Natural killer cell (primary cell): ENCODE measurements at regions of chrX and their contacts with region 1.

Region 1: DNA sequence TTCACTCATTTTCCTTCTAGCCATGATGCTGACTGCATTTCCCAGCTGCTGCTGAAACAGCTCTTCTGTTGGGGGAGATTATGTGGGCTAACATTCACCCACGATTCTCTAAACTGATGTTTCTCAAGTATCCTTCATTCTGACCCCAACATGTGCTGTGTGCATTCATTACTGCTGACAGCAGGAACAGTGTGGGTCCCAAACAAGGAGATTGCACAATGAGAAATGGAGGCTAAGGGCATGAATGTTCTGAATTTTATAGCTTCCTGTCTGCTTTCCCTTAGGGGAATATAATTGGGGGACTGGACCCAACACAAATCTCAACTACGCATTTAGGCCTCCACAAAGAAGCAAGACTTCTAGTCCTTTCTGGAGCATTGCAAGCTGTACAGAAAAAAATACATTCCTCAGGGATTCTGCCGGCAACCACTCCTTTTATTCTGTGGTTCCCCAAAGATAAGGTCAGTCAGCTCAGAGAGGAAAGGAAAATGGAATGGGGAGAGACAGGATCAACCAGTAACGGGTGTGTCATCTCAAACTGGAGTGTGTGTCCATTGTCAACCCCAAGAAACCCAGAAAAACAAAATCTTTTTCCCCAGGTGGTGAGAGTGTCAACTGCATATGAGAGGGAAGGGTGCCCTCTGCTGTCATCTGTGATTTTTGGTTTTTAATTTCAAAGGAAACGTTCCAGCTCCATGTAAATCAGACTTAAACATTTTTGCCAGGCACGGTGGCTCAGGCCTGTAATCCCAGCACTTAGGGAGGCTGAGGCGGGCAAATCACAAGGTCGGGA is 81.5 kb upstream of the EGFL6 start:
- DNase-seq: peak; percentile 18 to 77
- ATAC-seq: peak; percentile 36 to 59 (median 52)
- H3K4me3 ChIP-seq: no peak overlapping the region
- H3K4me3 Mint-ChIP-seq: peak overlapping the region; percentile 31
- H3K27ac ChIP-seq: peak overlapping the region; percentile 76
- H3K27ac Mint-ChIP-seq: peak overlapping the region; percentile 77 to 81
- H3K4me1 ChIP-seq: peaks cover 45% of the 10 kb centered on the region
- H3K4me1 Mint-ChIP-seq: peaks cover 42 to 48% of the 10 kb centered on the region in 2 donors
- H3K27me3 ChIP-seq: no peaks in the 10 kb centered on the region
- H3K27me3 Mint-ChIP-seq: peaks cover 0 to 16% of the 10 kb centered on the region in 2 donors
- CTCF ChIP-seq: peak; percentile 58

Region 2: GRCh38 chrX:12814420-12814819 is 673.5 kb before region 1 on chrX:
- intact Hi-C with region 1: loop called (anchors 5 kb)
- DNase-seq: peak in 1 of 2 donors; percentile 64
- ATAC-seq: peak; percentile 62 to 78 (median 65)
- H3K4me3 ChIP-seq: no peak overlapping the region
- H3K4me3 Mint-ChIP-seq: no peak overlapping the region
- H3K27ac ChIP-seq: no peak overlapping the region
- H3K27ac Mint-ChIP-seq: no peak overlapping the region
- H3K4me1 ChIP-seq: no peaks in the 10 kb centered on the region
- H3K4me1 Mint-ChIP-seq: peaks cover 5% of the 10 kb centered on the region in 2 donors
- H3K27me3 ChIP-seq: no peaks in the 10 kb centered on the region
- H3K27me3 Mint-ChIP-seq: no peaks in the 10 kb centered on the region
- CTCF ChIP-seq: peak; percentile 48

Region 3: DNA sequence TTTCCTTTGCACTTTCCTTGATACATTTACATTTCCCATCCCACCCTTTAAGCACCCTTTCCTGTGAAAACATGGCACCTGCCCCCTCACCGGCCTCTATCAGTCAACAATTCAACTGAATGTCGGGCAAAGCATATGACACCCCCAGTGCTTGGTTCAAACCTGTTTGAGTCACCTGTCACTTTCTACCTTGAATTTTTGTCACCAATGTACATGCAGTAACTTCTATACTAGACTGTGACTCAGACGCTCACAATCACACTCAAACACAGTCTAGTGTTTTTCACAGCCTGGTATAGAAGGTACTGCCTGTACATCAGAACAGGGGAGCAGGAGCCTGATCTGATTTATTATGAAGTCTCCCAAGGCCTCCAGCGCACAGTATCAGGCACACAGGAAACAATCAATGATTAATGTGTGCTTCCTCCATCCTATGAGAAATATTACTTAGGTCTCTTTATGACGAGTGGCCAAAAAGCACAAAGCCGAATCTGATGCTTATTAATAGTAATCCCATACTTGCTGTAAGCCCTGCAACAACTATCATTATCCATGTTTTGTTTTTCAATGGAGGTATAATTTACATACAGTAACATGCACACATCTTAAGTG is 394.3 kb before region 1 on chrX:
- intact Hi-C with region 1: loop called (anchors 1 kb)
- DNase-seq: peak in 1 of 2 donors; percentile 47
- ATAC-seq: peak in 1 of 3 donors; percentile 48
- H3K4me3 ChIP-seq: no peak overlapping the region
- H3K4me3 Mint-ChIP-seq: peak overlapping the region; percentile 13
- H3K27ac ChIP-seq: peak overlapping the region; percentile 97
- H3K27ac Mint-ChIP-seq: peak overlapping the region; percentile 99
- H3K4me1 ChIP-seq: peaks cover 44% of the 10 kb centered on the region
- H3K4me1 Mint-ChIP-seq: peaks cover 52 to 58% of the 10 kb centered on the region in 2 donors
- H3K27me3 ChIP-seq: no peaks in the 10 kb centered on the region
- H3K27me3 Mint-ChIP-seq: no peaks in the 10 kb centered on the region
- CTCF ChIP-seq: no peak

Region 4: GRCh38 chrX:13369256-13370030 is 118.5 kb before region 1 on chrX:
- intact Hi-C with region 1: loop called (anchors 5 kb)
- DNase-seq: no peak
- ATAC-seq: no peak
- H3K4me3 ChIP-seq: no peak overlapping the region
- H3K4me3 Mint-ChIP-seq: no peak overlapping the region
- H3K27ac ChIP-seq: no peak overlapping the region
- H3K27ac Mint-ChIP-seq: no peak overlapping the region
- H3K4me1 ChIP-seq: no peaks in the 10 kb centered on the region
- H3K4me1 Mint-ChIP-seq: peaks cover 14 to 15% of the 10 kb centered on the region in 2 donors
- H3K27me3 ChIP-seq: no peaks in the 10 kb centered on the region
- H3K27me3 Mint-ChIP-seq: peaks cover 0 to 40% of the 10 kb centered on the region in 2 donors
- CTCF ChIP-seq: no peak

Region 5: GRCh38 chrX:13638826-13639225 is 150.9 kb after region 1 on chrX:
- intact Hi-C with region 1: no loop called
- DNase-seq: no peak
- ATAC-seq: no peak
- H3K4me3 ChIP-seq: no peak overlapping the region
- H3K4me3 Mint-ChIP-seq: no peak overlapping the region
- H3K27ac ChIP-seq: no peak overlapping the region
- H3K27ac Mint-ChIP-seq: no peak overlapping the region
- H3K4me1 ChIP-seq: no peaks in the 10 kb centered on the region
- H3K4me1 Mint-ChIP-seq: no peaks in the 10 kb centered on the region
- H3K27me3 ChIP-seq: no peaks in the 10 kb centered on the region
- H3K27me3 Mint-ChIP-seq: peaks cover 0 to 25% of the 10 kb centered on the region in 2 donors
- CTCF ChIP-seq: no peak

Region 6: GRCh38 chrX:13653022-13653693 is 165.2 kb after region 1 on chrX and contains the start of gene TCEANC:
- intact Hi-C with region 1: loop called (anchors 10 kb)
- DNase-seq: peak; percentile 86 to 96
- ATAC-seq: peak; percentile 90 to 98 (median 96)
- H3K4me3 ChIP-seq: peak within 1 kb of the TSS; percentile 81
- H3K4me3 Mint-ChIP-seq: peak within 1 kb of the TSS; percentile 90
- H3K27ac ChIP-seq: peak within 1 kb of the TSS; percentile 97
- H3K27ac Mint-ChIP-seq: peak within 1 kb of the TSS; percentile 88 to 94
- H3K4me1 ChIP-seq: peaks cover 10% of the 10 kb centered on the region
- H3K4me1 Mint-ChIP-seq: peaks cover 4 to 30% of the 10 kb centered on the region in 2 donors
- H3K27me3 ChIP-seq: no peaks in the 10 kb centered on the region
- H3K27me3 Mint-ChIP-seq: peaks cover 0 to 6% of the 10 kb centered on the region in 2 donors
- CTCF ChIP-seq: no peak
- total RNA-seq, gene TCEANC: 11.2 to 17.8 (median 13.4) TPM